Activated naive CD8-positive, alpha-beta T cell treated with anti-CD3 and anti-CD28 coated beads, Interleukin-2, amount 10 ng/mL, durations not matched to agents 7 days and 5 days (primary cell): ENCODE measurements at regions of chr2 and their contacts with region 1.

Region 1: DNA sequence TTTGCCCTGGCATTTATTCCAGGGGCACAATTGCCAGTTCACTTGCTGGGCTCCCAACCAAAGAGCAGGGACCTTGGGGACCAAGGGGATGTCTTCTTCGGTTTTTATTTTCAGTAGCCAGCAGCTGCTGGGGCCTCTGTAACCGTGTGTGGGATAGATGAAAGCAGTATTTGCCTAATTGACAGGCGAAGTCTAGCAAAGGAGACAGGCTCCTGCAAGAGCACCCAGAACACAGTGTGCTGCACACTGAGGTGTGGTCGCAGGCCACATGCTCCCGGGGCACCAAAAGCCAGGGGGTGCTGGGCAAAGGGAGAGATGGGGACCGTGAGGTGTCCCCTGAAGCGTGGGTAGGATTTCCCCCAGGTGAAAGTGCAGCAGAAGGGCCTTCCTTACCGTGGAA is 5.3 kb downstream of the SAG start:
- DNase-seq: no peak
- ATAC-seq: no peak
- H3K4me3 Mint-ChIP-seq: no peak overlapping the region
- H3K27ac Mint-ChIP-seq: peak overlapping the region; percentile 19
- H3K4me1 Mint-ChIP-seq: peaks cover 20% of the 10 kb centered on the region
- H3K27me3 Mint-ChIP-seq: no peaks in the 10 kb centered on the region

Region 2: DNA sequence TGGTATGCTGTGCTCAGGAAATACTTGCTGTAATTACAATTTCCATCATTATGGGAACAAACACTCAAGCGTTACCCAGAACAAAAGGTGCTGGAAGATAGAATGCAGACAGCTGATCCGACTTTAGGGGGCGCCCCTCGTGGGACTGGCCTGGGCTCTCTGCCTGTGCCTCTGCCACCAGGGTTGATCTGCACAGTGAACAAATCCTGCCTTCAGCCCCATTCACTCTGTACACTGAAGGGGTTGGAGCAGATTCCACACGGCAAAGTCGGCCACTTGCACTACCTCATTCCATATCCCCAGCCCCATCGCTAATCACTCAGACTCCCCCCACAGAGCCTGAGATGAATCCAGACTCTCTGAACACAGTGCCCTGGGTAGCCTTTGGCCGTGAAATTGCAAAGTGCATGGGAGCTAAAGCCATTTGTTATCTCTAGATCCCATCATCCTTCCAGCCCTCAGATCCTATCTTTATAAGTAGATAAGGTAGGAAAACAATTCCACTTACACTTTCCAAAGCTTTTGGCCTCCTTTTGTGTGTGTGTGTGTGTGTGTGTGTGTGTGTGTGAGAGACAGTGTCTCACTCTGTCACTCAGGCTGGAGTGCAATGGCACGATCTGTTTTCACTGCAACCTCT is 183.4 kb before region 1 on chr2:
- POLR2A ChIA-PET with region 1: no interaction called
- DNase-seq: no peak
- ATAC-seq: no peak
- H3K4me3 Mint-ChIP-seq: no peak overlapping the region
- H3K27ac Mint-ChIP-seq: peak overlapping the region; percentile 34
- H3K4me1 Mint-ChIP-seq: peaks cover 24% of the 10 kb centered on the region
- H3K27me3 Mint-ChIP-seq: no peaks in the 10 kb centered on the region

Region 3: DNA sequence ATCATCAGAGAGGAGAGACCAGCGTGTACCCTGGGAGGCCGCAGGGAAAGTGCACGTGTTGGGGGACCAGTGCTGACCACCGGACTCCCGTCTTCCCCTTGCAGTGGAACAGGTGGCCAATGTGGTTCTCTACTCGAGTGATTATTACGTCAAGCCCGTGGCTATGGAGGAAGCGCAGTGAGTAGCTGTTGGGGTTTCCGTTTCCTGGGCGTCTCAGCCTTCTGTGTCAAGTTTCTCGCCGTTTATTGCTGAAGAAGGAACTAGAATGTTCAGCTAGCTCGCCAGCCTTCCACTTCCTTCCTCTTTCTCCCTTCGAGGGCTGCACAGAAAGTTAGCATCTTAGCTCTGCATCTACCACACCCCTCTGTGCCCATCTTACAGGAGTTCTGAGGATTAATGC is 18.7 kb after region 1 on chr2:
- POLR2A ChIA-PET with region 1: interaction called, 10 read pairs
- DNase-seq: peak; percentile 67
- ATAC-seq: peak; percentile 94
- H3K4me3 Mint-ChIP-seq: peak overlapping the region; percentile 80
- H3K27ac Mint-ChIP-seq: peak overlapping the region; percentile 99
- H3K4me1 Mint-ChIP-seq: peaks cover 41% of the 10 kb centered on the region
- H3K27me3 Mint-ChIP-seq: peaks cover 3% of the 10 kb centered on the region

Region 4: DNA sequence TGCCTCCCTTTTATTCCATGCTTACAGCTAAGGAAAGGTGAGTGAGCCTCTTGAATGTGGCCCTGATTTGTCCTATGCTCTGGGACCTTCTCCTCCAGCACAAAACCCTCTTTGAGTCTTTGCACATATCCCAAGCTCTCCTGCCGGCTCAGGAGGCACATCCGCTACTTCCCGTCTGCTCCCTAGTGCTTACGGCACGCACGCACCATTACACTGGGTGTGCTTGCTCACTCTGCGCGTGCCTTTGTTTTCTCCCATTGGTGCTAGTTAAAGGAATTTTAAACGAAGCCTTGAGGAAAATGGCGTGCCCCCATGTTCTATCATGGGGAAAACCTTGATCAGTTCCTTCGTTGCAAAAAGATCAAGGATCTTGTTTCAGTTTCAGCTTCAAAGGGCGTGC is 33.5 kb after region 1 on chr2:
- POLR2A ChIA-PET with region 1: no interaction called
- DNase-seq: no peak
- ATAC-seq: no peak
- H3K4me3 Mint-ChIP-seq: no peak overlapping the region
- H3K27ac Mint-ChIP-seq: peak overlapping the region; percentile 22
- H3K4me1 Mint-ChIP-seq: peaks cover 20% of the 10 kb centered on the region
- H3K27me3 Mint-ChIP-seq: no peaks in the 10 kb centered on the region

Region 5: GRCh38 chr2:233413559-233414272 is 100.8 kb after region 1 on chr2:
- POLR2A ChIA-PET with region 1: no interaction called
- DNase-seq: no peak
- ATAC-seq: no peak
- H3K4me3 Mint-ChIP-seq: no peak overlapping the region
- H3K27ac Mint-ChIP-seq: no peak overlapping the region
- H3K4me1 Mint-ChIP-seq: peaks cover 54% of the 10 kb centered on the region
- H3K27me3 Mint-ChIP-seq: no peaks in the 10 kb centered on the region